ENCODE measurements at regions of chr14 and their contacts with region 1.

Region 1: DNA sequence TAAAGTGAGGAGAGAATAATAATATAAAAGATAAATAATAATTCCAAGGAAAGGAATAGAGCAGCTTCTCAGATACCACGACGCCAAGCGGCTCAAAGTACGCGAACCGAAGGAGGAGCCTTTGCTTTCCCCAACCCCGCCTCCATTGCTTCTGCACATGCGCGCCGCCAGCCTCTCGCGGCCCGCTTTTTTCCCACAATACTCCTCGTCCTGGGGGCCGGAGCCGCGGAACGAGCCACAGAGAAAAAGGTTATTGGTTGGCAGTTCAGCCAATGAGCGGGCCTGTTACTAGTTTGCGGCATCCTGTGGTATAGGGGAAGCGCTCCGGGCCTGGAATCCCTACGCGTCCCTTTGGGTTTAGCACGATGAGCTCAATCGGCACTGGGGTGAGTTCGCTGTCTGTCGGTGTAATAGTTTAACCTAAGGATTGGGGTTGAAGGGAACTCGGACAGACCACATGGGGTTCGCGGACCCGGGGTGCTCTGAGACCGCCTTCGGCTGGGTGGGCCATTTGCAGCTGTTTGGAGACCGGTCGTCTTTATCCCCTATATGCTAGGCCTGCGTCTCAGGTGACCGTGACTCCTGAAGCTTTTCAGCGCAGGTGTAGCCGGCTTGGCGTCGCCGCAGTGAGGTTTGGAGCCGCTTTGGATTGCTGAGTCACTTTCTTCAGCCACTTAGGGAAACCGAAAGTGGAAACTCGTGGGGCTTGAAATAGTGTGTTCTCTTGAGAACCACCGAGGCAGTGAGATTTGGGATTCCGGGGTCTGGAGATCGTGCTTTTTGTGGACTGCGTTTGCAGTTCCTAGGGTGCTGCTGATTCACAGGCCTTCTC is at the start of gene PSMA3:
- DNase-seq: peak; percentile 98
- ATAC-seq: peak; percentile 93
- H3K4me3 Mint-ChIP-seq: peak within 1 kb of the TSS; percentile 96
- H3K27ac Mint-ChIP-seq: peak within 1 kb of the TSS; percentile 96
- H3K4me1 Mint-ChIP-seq: peaks cover 40% of the 10 kb centered on the region
- H3K27me3 Mint-ChIP-seq: no peaks in the 10 kb centered on the region
- total RNA-seq, gene PSMA3: 342 to 425 TPM

Region 2: GRCh38 chr14:58272588-58273372 is 28.0 kb after region 1 on chr14:
- CTCF ChIA-PET with region 1: no interaction called
- POLR2A ChIA-PET with region 1: interaction called, 3 read pairs
- intact Hi-C with region 1: loop called in 1 of 2 experiments (anchors 2 kb)
- DNase-seq: no peak
- ATAC-seq: no peak
- H3K4me3 Mint-ChIP-seq: no peak overlapping the region
- H3K27ac Mint-ChIP-seq: peak overlapping the region; percentile 13
- H3K4me1 Mint-ChIP-seq: peaks cover 50% of the 10 kb centered on the region
- H3K27me3 Mint-ChIP-seq: no peaks in the 10 kb centered on the region

Region 3: DNA sequence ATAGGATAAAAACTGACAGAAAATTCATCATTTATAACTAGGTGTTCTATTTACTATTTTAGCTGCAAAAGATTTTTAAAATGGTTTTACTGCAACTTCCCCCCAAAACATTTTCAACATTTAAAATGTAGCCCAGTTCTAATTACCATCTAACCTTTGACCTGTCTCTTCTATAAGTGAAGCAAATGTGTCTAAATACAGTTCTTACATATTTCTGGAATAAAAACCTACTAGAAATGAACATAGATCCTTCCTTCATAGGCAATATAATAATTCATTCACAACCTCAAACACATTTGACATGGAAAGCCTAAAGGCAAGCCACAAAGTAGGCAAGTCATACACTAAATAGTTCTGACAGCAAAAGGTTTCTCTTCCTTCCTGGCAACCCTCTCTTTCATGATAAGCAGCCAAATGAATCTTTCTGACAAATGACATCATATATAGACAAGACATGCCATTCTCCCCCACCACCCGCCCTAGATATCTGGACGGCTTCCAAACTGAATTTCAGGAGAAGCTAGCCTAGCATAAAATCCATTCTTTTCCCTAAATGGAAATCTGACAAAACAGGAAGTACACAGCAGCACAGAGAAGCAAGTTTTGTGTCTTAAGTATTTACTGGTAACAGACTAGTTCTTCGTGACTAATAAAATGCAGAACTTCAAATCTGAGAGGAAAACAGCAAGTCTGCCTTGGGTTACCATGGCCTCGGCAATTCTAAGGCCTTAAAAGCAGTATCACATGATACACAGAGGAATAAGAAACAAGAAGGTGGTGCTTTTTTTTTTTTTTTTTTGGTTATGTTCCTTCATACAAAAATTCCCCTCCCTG is 36.4 kb after region 1 on chr14:
- CTCF ChIA-PET with region 1: interaction called, 3 read pairs
- POLR2A ChIA-PET with region 1: no interaction called
- intact Hi-C with region 1: loop called (anchors 1 to 2 kb)
- DNase-seq: peak; percentile 56
- ATAC-seq: peak; percentile 87
- H3K4me3 Mint-ChIP-seq: peak overlapping the region; percentile 50
- H3K27ac Mint-ChIP-seq: peak overlapping the region; percentile 95
- H3K4me1 Mint-ChIP-seq: peaks cover 75% of the 10 kb centered on the region
- H3K27me3 Mint-ChIP-seq: no peaks in the 10 kb centered on the region

Region 4: GRCh38 chr14:58797010-58797429 is 552.2 kb after region 1 on chr14:
- CTCF ChIA-PET with region 1: no interaction called
- POLR2A ChIA-PET with region 1: no interaction called
- intact Hi-C with region 1: no loop called
- DNase-seq: no peak
- ATAC-seq: no peak
- H3K4me3 Mint-ChIP-seq: no peak overlapping the region
- H3K27ac Mint-ChIP-seq: no peak overlapping the region
- H3K4me1 Mint-ChIP-seq: no peaks in the 10 kb centered on the region
- H3K27me3 Mint-ChIP-seq: peaks cover 6% of the 10 kb centered on the region

Region 5: GRCh38 chr14:59438195-59438647 is 1193.4 kb after region 1 on chr14:
- CTCF ChIA-PET with region 1: no interaction called
- POLR2A ChIA-PET with region 1: no interaction called
- intact Hi-C with region 1: no loop called
- DNase-seq: no peak
- ATAC-seq: no peak
- H3K4me3 Mint-ChIP-seq: no peak overlapping the region
- H3K27ac Mint-ChIP-seq: no peak overlapping the region
- H3K4me1 Mint-ChIP-seq: no peaks in the 10 kb centered on the region
- H3K27me3 Mint-ChIP-seq: no peaks in the 10 kb centered on the region

Measured in activated CD4-positive, alpha-beta T cell treated with anti-CD3 and anti-CD28 coated beads for 36 hours (primary cell).